Activated B cell treated with CpG ODN at 0.5 μM for 24 hours (primary cell): ENCODE measurements at regions of chr13 and their contacts with region 1.

Region 1: GRCh38 chr13:51419001-51419636 is 33.7 kb downstream of the INTS6 start:
- DNase-seq: no peak
- ATAC-seq: peak; percentile 76
- H3K4me3 Mint-ChIP-seq: peak overlapping the region; percentile 64
- H3K27ac Mint-ChIP-seq: peak overlapping the region; percentile 85
- H3K4me1 Mint-ChIP-seq: peaks cover 83% of the 10 kb centered on the region
- H3K27me3 Mint-ChIP-seq: no peaks in the 10 kb centered on the region
- CTCF ChIP-seq: no peak

Region 2: GRCh38 chr13:49731766-49732165 is 1687.4 kb before region 1 on chr13:
- CTCF ChIA-PET with region 1: no interaction called
- POLR2A ChIA-PET with region 1: no interaction called
- intact Hi-C with region 1: no loop called
- DNase-seq: no peak
- ATAC-seq: no peak
- H3K4me3 Mint-ChIP-seq: no peak overlapping the region
- H3K27ac Mint-ChIP-seq: no peak overlapping the region
- H3K4me1 Mint-ChIP-seq: no peaks in the 10 kb centered on the region
- H3K27me3 Mint-ChIP-seq: no peaks in the 10 kb centered on the region
- CTCF ChIP-seq: no peak

Region 3: GRCh38 chr13:51385114-51385513 is 34.0 kb before region 1 on chr13:
- CTCF ChIA-PET with region 1: no interaction called
- POLR2A ChIA-PET with region 1: no interaction called
- intact Hi-C with region 1: loop called (anchors 5 kb)
- DNase-seq: no peak
- ATAC-seq: no peak
- H3K4me3 Mint-ChIP-seq: no peak overlapping the region
- H3K27ac Mint-ChIP-seq: no peak overlapping the region
- H3K4me1 Mint-ChIP-seq: peaks cover 3% of the 10 kb centered on the region
- H3K27me3 Mint-ChIP-seq: no peaks in the 10 kb centered on the region
- CTCF ChIP-seq: no peak

Region 4: GRCh38 chr13:51397262-51397941 is 21.7 kb before region 1 on chr13:
- CTCF ChIA-PET with region 1: no interaction called
- POLR2A ChIA-PET with region 1: no interaction called
- intact Hi-C with region 1: loop called (anchors 2 kb)
- DNase-seq: no peak
- ATAC-seq: no peak
- H3K4me3 Mint-ChIP-seq: no peak overlapping the region
- H3K27ac Mint-ChIP-seq: peak overlapping the region; percentile 6
- H3K4me1 Mint-ChIP-seq: peaks cover 36% of the 10 kb centered on the region
- H3K27me3 Mint-ChIP-seq: no peaks in the 10 kb centered on the region
- CTCF ChIP-seq: no peak